Calu3 (cell line): ENCODE measurements at regions of chr17 and their contacts with region 1.

Region 1: DNA sequence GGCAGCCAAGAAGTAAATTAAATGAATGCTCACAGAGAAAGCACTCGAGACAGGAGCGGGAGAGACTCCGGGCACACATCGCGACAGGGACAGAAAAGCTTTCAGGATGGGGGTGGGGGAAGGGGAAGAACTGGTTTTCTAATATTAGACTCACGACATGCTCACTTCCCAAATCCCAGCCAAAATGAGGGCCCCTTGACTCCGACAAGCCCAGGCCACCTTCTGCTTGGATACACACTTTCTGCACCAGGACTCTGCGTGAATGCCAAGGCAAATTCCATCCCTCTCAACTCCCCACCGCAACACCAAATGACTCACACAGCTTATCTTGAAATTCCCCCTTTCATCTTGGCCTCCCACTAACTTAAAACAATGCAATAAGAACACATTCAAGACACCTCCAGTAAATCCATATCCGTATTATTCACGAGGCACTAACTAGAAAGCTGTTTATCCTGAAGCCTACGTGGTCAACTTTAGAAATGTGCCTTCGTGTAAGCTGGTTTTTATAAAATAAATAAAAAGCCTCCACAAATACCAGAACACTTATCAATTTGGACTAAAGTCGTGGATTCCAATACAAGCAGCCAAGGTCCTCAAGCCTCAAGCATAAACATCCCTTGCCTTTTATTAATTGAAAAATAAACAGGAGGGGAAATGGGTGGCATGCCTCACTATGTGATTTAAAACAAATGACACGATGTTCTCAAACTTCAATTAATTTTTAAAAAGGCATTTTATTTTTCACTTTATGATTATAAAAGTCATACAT is 46.1 kb downstream of the NXN start:
- DNase-seq: peak; percentile 55
- H3K4me3 Mint-ChIP-seq: peak overlapping the region; percentile 44
- H3K27ac Mint-ChIP-seq: peak overlapping the region; percentile 61
- H3K4me1 Mint-ChIP-seq: peaks cover 19% of the 10 kb centered on the region
- H3K27me3 Mint-ChIP-seq: peaks cover 8% of the 10 kb centered on the region
- CTCF ChIP-seq: no peak

Region 2: DNA sequence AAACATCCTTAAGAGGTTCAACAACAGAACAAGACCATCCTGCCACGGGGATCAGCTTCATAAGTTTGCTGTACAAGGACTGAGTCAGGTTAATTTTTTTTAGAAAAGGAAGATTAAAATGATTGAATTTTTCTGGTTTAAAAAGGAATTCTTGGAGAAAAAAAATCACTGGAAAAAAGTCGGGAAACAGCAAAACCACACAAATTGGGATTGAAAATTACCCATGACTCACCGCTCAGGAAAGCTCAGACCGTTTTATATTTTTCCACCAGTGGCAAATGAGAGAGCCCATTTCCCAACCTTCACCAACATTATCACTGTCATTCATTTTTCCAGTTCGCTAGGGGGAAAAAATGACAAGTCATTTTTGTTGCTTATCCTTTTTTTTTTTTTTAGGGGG is 104.7 kb before region 1 on chr17:
- CTCF ChIA-PET with region 1: no interaction called
- intact Hi-C with region 1: no loop called
- DNase-seq: no peak
- H3K4me3 Mint-ChIP-seq: no peak overlapping the region
- H3K27ac Mint-ChIP-seq: no peak overlapping the region
- H3K4me1 Mint-ChIP-seq: no peaks in the 10 kb centered on the region
- H3K27me3 Mint-ChIP-seq: no peaks in the 10 kb centered on the region
- CTCF ChIP-seq: no peak

Region 3: DNA sequence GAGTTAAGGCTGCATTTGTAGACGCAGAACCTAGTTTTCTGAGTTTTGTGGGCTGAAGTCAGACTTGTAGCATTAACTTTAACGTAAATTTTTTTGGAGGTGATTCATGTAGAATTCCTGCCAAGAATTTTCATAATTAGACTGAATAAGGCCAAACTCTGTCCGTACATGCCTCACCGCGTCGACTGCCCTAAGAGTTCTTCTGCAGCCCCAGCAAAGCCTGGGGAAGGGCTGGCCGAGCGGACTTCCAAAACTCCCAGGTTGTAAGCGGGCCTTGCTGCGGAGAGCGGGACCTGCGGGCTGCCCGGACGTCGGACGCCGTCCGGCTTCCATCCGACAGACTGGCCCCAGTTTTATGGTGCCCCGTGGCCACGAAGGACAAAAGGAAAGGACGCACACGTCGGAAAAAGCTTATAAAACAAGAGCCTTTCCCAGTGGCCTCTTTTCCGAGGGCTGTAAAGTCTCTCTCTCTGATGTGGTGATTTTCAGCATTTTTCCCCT is 29.5 kb before region 1 on chr17:
- CTCF ChIA-PET with region 1: no interaction called
- intact Hi-C with region 1: no loop called
- DNase-seq: no peak
- H3K4me3 Mint-ChIP-seq: no peak overlapping the region
- H3K27ac Mint-ChIP-seq: no peak overlapping the region
- H3K4me1 Mint-ChIP-seq: no peaks in the 10 kb centered on the region
- H3K27me3 Mint-ChIP-seq: no peaks in the 10 kb centered on the region
- CTCF ChIP-seq: no peak

Region 4: DNA sequence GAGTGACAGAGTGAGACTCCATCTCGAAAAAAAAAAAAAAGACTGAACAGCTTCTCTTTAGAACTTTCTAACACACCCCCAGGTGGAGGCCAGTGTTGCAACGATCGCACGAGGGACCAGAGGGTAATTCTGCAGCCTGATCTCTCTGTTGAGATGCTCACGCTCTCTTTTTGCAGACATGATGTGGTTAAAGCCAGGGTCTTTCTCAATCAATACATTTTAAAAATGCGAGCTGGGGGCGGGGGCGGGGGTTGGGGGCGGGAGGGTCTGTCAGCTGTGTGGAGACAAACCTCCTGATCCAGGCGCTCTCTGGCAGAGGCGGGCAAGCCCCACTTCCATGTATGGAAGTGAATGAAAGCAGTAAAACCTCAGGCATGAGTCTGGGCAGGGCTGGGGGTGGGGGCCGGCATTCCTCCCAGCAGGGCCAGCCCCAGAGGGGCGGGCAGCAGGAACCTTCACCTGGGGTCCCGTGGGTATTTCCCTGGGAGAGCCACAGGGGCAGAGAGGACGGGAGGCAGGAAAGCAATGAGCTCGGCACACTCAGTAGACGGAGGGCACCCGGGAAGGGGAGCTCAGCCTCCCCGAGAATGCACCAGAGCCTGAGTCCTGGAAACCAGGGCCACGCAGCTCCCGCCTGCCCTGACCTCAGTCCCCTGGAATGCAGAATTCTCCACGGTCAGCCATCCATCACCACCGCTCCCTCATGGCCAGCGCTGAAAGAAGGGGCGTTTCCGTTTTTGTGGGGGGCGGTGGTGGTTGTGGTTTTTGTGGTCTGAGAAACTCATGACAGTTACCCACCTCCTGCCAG is 18.0 kb after region 1 on chr17:
- CTCF ChIA-PET with region 1: no interaction called
- intact Hi-C with region 1: loop called (anchors 2 kb)
- DNase-seq: peak; percentile 16
- H3K4me3 Mint-ChIP-seq: no peak overlapping the region
- H3K27ac Mint-ChIP-seq: no peak overlapping the region
- H3K4me1 Mint-ChIP-seq: no peaks in the 10 kb centered on the region
- H3K27me3 Mint-ChIP-seq: no peaks in the 10 kb centered on the region
- CTCF ChIP-seq: no peak